Activated CD4-positive, alpha-beta memory T cell treated with anti-CD3 and anti-CD28 coated beads, Interleukin-2, amount 10 ng/mL, durations not matched to agents 7 days and 5 days (primary cell): ENCODE measurements at regions of chr10 and their contacts with region 1.

Region 1: GRCh38 chr10:12214763-12215218 is 18.8 kb downstream of the CDC123 start:
- DNase-seq: peak; percentile 33
- H3K4me3 Mint-ChIP-seq: peak overlapping the region; percentile 29
- H3K27ac Mint-ChIP-seq: peak overlapping the region; percentile 69
- H3K4me1 Mint-ChIP-seq: peaks cover 19% of the 10 kb centered on the region
- H3K27me3 Mint-ChIP-seq: no peaks in the 10 kb centered on the region

Region 2: DNA sequence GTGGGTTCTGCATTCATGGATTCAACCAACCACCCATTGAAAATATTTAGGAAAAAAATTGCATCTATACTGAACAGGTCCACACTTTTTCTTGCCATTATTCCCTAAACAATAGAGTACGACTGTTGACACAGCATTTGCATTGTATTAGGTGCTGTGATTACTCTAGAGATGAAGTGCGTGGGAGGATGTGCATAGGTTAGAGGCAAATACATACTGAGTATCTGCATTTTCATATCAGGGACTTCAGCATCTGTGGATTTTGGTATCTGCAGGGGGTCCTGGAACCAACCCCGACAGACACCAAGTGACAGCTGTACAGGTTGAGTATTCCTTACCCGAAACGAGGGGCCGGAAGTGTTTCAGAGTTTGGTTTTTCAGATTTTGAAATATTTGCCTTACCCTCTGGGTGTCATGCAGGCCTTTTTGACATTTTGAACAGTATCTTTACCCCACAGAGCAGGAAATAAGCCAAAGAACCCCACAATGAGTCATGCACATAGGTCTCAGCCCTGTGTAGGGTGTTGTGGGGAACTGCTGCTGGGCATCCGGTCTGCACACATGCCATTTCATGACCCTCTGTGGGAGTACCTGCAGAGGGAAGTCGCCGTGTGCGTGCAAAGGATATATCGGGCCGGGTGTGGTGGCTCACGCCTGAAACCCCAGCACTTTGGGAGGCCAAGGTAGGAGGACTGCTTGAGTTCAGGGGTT is 33.6 kb before region 1 on chr10:
- CTCF ChIA-PET with region 1: interaction called, 14 read pairs
- POLR2A ChIA-PET with region 1: no interaction called
- DNase-seq: peak; percentile 87
- H3K4me3 Mint-ChIP-seq: peak overlapping the region; percentile 25
- H3K27ac Mint-ChIP-seq: peak overlapping the region; percentile 98
- H3K4me1 Mint-ChIP-seq: peaks cover 45% of the 10 kb centered on the region
- H3K27me3 Mint-ChIP-seq: no peaks in the 10 kb centered on the region

Region 3: DNA sequence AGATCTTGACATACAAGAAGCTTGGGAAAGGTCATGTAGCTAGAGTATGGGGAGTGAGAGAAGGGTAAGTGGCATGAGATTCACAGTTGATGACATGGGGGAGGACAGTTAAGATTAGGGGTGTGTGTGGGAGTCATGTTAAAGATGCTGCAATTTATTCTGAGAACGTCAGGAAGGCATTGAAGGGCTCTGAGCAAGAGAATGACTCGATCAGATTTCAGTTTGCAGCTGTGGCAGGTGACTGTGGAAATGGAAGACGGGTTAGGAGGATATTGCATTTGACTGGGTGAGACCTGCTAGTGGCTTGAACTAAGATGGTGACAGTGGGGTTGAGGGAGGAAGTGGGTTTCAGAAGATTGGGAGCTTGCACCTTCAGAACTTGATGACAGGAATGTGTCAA is 13.2 kb before region 1 on chr10:
- CTCF ChIA-PET with region 1: interaction called, 22 read pairs
- POLR2A ChIA-PET with region 1: no interaction called
- DNase-seq: no peak
- H3K4me3 Mint-ChIP-seq: no peak overlapping the region
- H3K27ac Mint-ChIP-seq: peak overlapping the region; percentile 24
- H3K4me1 Mint-ChIP-seq: peaks cover 52% of the 10 kb centered on the region
- H3K27me3 Mint-ChIP-seq: no peaks in the 10 kb centered on the region

Region 4: DNA sequence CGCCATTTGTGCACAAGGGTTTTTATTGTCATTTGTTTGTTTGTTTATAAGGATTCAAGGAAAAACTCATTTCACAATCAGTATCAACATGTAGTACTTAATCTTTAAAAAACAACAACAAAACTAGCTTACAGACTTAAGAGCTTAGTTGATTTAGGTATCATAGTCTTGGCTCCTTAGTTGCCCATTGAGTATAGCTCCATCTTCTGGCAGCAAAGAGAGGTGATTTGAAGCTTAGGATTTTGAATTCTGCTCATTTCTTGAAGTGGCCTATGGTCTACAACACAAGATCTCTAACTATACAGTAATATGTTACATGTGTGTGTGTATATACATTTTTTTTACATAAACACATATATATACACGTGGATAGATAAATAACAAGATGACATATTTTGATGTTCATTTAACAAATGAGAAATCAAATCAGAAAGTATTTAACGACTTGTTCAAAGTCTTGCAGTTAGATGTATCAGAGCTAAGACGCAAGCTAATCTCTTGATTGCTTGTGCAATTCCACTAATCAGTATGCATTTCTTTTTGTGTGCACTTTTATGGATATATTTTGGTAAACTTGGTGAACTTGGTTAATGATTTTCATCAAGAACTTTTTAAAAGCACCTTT is 441.8 kb after region 1 on chr10:
- CTCF ChIA-PET with region 1: interaction called, 34 read pairs
- POLR2A ChIA-PET with region 1: no interaction called
- DNase-seq: no peak
- H3K4me3 Mint-ChIP-seq: no peak overlapping the region
- H3K27ac Mint-ChIP-seq: peak overlapping the region; percentile 45
- H3K4me1 Mint-ChIP-seq: peaks cover 28% of the 10 kb centered on the region
- H3K27me3 Mint-ChIP-seq: no peaks in the 10 kb centered on the region

Region 5: DNA sequence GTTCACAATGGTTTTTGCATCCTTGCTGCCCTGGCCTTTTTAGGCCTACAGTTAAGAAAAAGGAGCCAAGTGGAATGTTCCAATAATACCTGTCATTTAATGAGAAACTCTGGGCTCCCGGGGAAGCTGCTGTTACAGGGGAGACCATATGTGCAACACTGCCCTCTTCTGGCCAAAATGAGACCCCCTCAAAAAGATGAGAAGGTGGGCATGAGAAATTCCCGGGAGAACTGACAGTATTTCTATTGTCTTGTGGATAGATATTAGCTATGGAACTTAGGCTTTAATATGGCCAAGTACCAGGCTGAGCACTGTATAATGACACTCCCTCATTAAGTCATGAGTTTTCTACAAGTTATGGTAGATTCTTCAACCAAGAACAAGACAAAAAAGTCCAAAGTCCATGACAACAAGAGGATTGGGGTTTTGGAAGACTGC is 687.4 kb after region 1 on chr10:
- CTCF ChIA-PET with region 1: interaction called, 16 read pairs
- POLR2A ChIA-PET with region 1: no interaction called
- DNase-seq: peak; percentile 43
- H3K4me3 Mint-ChIP-seq: no peak overlapping the region
- H3K27ac Mint-ChIP-seq: no peak overlapping the region
- H3K4me1 Mint-ChIP-seq: no peaks in the 10 kb centered on the region
- H3K27me3 Mint-ChIP-seq: peaks cover 4% of the 10 kb centered on the region